ENCODE measurements at regions of chr3 and their contacts with region 1.

Region 1: DNA sequence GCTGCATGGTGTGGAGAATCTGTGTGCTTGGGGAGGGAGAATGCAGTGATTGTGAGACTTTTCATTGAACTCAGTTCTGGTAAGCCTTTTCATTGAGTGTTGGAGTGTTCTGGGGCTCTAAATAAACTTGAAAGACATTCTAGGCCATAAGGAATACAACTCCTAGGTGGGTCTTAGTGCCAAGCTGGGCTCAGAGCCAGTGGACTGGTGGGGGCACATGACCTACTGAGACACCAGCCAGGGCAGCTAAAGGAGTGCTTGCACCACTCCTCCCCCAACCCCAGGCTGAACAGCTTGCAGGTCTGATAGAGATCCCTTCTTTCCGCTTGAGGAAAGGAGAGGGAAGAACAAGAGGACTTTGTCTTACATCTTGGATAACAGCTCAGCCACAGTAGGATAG is 21.7 kb upstream of the KPNA4 start:
- DNase-seq: peak in 1 of 5 donors; percentile 43
- ATAC-seq: peak in 3 of 4 donors; percentile 44 to 78 (median 55)
- H3K4me3 ChIP-seq: no peak overlapping the region
- H3K27ac ChIP-seq: no peak overlapping the region
- H3K4me1 ChIP-seq: no peaks in the 10 kb centered on the region
- H3K27me3 ChIP-seq: no peaks in the 10 kb centered on the region
- CTCF ChIP-seq: no peak
- POLR2A ChIP-seq: no peak

Region 2: GRCh38 chr3:160697628-160698382 is 110.7 kb after region 1 on chr3:
- intact Hi-C with region 1: loop called in 1 of 10 experiments (anchors 10 kb)
- DNase-seq: no peak
- ATAC-seq: peak; percentile 34 to 67 (median 55)
- H3K4me3 ChIP-seq: no peak overlapping the region
- H3K27ac ChIP-seq: peak overlapping the region in 3 of 12 donors; percentile 26 to 40 (median 28)
- H3K4me1 ChIP-seq: peaks cover 0 to 17% (median 8%) of the 10 kb centered on the region in 12 donors
- H3K27me3 ChIP-seq: no peaks in the 10 kb centered on the region
- CTCF ChIP-seq: no peak
- POLR2A ChIP-seq: no peak